ENCODE measurements at regions of chr3 and their contacts with region 1.

Region 1: GRCh38 chr3:108914774-108915641 is 38.7 kb downstream of the GUCA1C start:
- DNase-seq: peak; percentile 33
- ATAC-seq: peak; percentile 54 to 68

Region 2: DNA sequence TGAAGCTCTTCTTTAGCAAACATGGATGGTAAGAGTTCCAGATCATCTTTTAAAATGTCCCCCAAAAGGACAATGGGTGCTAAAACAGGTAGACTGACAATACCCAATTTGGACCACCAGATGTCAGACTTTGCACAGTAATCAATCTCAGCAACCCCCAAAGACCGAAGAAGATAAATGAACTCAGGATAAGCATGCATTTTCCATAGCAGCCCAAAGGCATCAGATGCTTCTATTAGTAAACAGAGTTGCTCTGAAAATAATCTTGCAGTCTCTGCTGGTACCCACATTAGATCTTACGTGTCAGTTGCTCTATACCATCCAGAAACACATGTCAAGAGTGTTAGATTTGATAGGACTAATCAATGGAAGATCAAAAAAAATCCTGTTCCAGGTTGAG is 425.2 kb before region 1 on chr3:
- intact Hi-C with region 1: loop called in 1 of 2 experiments (anchors 10 kb)
- DNase-seq: no peak
- ATAC-seq: peak; percentile 44 to 50

Region 3: DNA sequence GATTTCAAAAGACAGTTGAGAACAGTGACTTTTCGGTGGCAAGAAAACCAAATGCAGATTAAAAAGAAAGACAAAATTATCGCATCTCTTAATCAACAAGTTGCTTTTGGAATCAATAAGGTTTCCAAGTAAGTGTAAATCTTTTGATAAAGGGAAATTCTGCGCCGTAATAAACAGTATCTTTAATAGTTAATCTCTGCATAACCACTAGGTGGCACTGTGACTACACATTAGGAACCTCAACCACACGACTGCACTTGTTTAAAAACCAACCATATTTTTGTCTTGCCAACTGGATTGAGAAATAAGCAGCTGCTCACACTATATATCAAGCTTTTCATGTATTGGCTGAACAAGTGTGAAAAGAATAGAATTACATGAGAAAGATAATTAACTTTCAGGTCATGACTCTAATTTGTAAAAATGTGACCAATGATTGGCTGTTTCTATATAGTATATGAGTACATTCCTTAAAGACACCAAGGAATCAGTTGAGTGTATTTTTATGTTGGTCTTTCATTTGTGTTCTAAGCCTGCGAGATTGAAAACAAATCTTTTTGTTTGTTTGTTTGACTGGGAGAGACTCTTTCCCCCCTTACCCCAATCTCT is 252.8 kb before region 1 on chr3:
- intact Hi-C with region 1: loop called in 1 of 2 experiments (anchors 5 kb)
- DNase-seq: no peak
- ATAC-seq: peak; percentile 67 to 70

Region 4: GRCh38 chr3:109177908-109178307 is 262.9 kb after region 1 on chr3:
- intact Hi-C with region 1: no loop called
- DNase-seq: no peak
- ATAC-seq: no peak